ENCODE measurements at regions of chr1 and their contacts with region 1.

Region 1: DNA sequence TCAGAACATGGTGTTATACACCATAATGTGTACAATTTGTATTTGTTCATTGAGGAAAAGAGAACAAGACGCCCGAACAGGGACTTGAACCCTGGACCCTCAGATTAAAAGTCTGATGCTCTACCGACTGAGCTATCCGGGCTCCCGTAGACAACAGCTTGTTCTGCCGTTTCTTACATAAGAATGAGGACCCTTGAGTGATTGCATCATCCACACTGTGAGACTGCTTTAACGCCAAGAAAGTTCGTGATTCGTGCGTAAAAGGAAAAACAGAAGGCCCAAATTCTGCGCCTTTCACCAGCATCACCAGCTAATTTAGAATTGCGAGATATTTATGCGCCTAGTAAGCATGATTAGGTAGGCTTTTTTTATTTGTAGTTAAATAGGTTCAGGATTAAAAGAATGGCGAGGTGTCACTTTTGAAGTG is 9.2 kb upstream of the MDM4 start:
- DNase-seq: peak; percentile 66 to 94 (median 68)
- ATAC-seq: peak; percentile 79
- H3K4me3 ChIP-seq: peak overlapping the region; percentile 46
- H3K27ac ChIP-seq: peak overlapping the region; percentile 91
- H3K4me1 ChIP-seq: peaks cover 0 to 6% of the 10 kb centered on the region in 2 experiments; a peak in 2 of 5 replicates
- H3K27me3 ChIP-seq: no peaks in the 10 kb centered on the region
- CTCF ChIP-seq: no peak
- EP300 ChIP-seq: peak; percentile 85
- POLR2A ChIP-seq: no peak
- RAD21 ChIP-seq: peak in 1 of 2 experiments; percentile 55; a peak in 3 of 4 replicates

Region 2: GRCh38 chr1:203861379-203862184 is 645.4 kb before region 1 on chr1 and contains the start of gene SNRPE:
- CTCF ChIA-PET with region 1: no interaction called
- POLR2A ChIA-PET with region 1: no interaction called
- in situ Hi-C with region 1: no loop called
- intact Hi-C with region 1: loop called (anchors 10 kb)
- DNase-seq: peak; percentile 96 to 100 (median 97)
- ATAC-seq: peak; percentile 97
- H3K4me3 ChIP-seq: peak within 1 kb of the TSS; percentile 92
- H3K27ac ChIP-seq: peak within 1 kb of the TSS; percentile 95
- H3K4me1 ChIP-seq: peaks cover 4 to 10% of the 10 kb centered on the region in 2 experiments; a peak in 4 of 5 replicates
- H3K27me3 ChIP-seq: no peaks in the 10 kb centered on the region
- CTCF ChIP-seq: peak; percentile 96 to 99 (median 98)
- EP300 ChIP-seq: peak; percentile 59
- POLR2A ChIP-seq: peak; percentile 99
- RAD21 ChIP-seq: peak; percentile 98 to 99
- polyA plus RNA-seq, gene SNRPE: 1,614 to 1,893 TPM

Region 3: GRCh38 chr1:204171751-204172178 is 335.2 kb before region 1 on chr1:
- CTCF ChIA-PET with region 1: no interaction called
- POLR2A ChIA-PET with region 1: no interaction called
- in situ Hi-C with region 1: loop called (anchors 10 kb)
- intact Hi-C with region 1: no loop called
- DNase-seq: no peak
- ATAC-seq: no peak
- H3K4me3 ChIP-seq: no peak overlapping the region
- H3K27ac ChIP-seq: no peak overlapping the region
- H3K4me1 ChIP-seq: peaks cover 4 to 7% of the 10 kb centered on the region in 2 experiments; a peak in 3 of 5 replicates
- H3K27me3 ChIP-seq: peaks cover 4 to 5% of the 10 kb centered on the region in 2 experiments; a peak in 4 of 5 replicates
- CTCF ChIP-seq: no peak
- EP300 ChIP-seq: no peak
- POLR2A ChIP-seq: no peak
- RAD21 ChIP-seq: 0 out of 4 replicates have a peak, but pooled peaks of 1 of the 2 experiments have one; percentile 21

Region 4: GRCh38 chr1:204384994-204385352 is 122.0 kb before region 1 on chr1:
- CTCF ChIA-PET with region 1: interaction called, 4 read pairs
- POLR2A ChIA-PET with region 1: interaction called, 3 read pairs
- in situ Hi-C with region 1: no loop called
- intact Hi-C with region 1: loop called (anchors 5 kb)
- DNase-seq: no peak
- ATAC-seq: peak; percentile 19; the same call in 1 of the 3 replicates
- H3K4me3 ChIP-seq: no peak overlapping the region
- H3K27ac ChIP-seq: no peak overlapping the region
- H3K4me1 ChIP-seq: no peaks in the 10 kb centered on the region; a peak in 1 of 5 replicates
- H3K27me3 ChIP-seq: peaks cover 20 to 22% of the 10 kb centered on the region in 2 experiments
- CTCF ChIP-seq: no peak
- EP300 ChIP-seq: no peak
- POLR2A ChIP-seq: no peak
- RAD21 ChIP-seq: no peak

Region 5: GRCh38 chr1:204431310-204432165 is 75.4 kb before region 1 on chr1:
- CTCF ChIA-PET with region 1: interaction called, 28 read pairs
- POLR2A ChIA-PET with region 1: interaction called, 6 read pairs
- in situ Hi-C with region 1: no loop called
- intact Hi-C with region 1: loop called (anchors 1 kb)
- DNase-seq: peak; percentile 81 to 89 (median 88)
- ATAC-seq: peak; percentile 98
- H3K4me3 ChIP-seq: no peak overlapping the region
- H3K27ac ChIP-seq: no peak overlapping the region
- H3K4me1 ChIP-seq: peaks cover 0 to 4% of the 10 kb centered on the region in 2 experiments; a peak in 3 of 5 replicates
- H3K27me3 ChIP-seq: peaks cover 23 to 50% of the 10 kb centered on the region in 2 experiments
- CTCF ChIP-seq: peak; percentile 86 to 97 (median 91)
- EP300 ChIP-seq: no peak
- POLR2A ChIP-seq: no peak
- RAD21 ChIP-seq: peak; percentile 73 to 80

Region 6: GRCh38 chr1:204565617-204566582 is 58.9 kb after region 1 on chr1:
- CTCF ChIA-PET with region 1: no interaction called
- POLR2A ChIA-PET with region 1: interaction called, 10 read pairs
- in situ Hi-C with region 1: no loop called
- intact Hi-C with region 1: loop called (anchors 2 kb)
- DNase-seq: peak; percentile 84 to 92 (median 90)
- ATAC-seq: peak; percentile 92
- H3K4me3 ChIP-seq: no peak overlapping the region
- H3K27ac ChIP-seq: peak overlapping the region; percentile 4; the same call in 1 of the 3 replicates
- H3K4me1 ChIP-seq: peaks cover 12 to 16% of the 10 kb centered on the region in 2 experiments; a peak in 4 of 5 replicates
- H3K27me3 ChIP-seq: no peaks in the 10 kb centered on the region
- CTCF ChIP-seq: peak; percentile 81 to 91 (median 90)
- EP300 ChIP-seq: peak; percentile 95
- POLR2A ChIP-seq: no peak
- RAD21 ChIP-seq: peak; percentile 94 to 98

Region 7: DNA sequence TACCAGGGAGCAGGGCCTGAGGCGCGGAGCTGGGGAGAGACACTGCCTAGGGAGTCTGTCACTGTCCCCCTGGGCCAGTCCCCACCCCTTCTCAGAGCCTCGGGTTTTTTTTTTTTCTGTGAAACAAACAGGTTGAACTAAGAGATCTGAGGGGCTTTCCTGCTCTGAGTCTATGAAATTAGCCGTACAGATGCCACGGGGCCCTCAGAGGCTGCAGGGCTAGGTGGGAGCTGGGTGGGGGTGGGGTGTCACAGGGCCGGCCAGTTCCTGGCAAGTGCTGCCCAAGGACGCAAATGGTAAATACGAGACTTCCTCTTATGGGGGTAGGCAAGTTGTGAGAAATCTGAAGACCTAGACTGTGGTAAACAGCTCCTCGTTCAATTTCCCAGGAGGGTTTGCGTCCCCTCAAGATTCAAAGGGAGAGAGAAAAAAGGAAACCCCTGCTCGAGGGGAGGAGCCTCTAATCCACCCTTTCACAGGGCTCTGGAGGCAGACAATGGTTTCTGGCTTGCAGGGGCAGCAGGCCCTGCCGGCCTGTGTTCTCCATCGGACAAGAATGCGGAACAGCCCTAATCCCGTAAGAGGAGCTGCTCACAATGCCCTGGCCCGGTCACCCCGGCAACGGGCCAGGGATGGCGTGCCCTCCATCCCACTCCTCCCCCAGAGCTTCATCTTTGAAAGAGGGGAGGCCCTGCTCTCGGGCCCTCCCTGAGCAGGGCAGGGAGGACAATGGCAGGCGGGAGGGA is 806.8 kb after region 1 on chr1:
- CTCF ChIA-PET with region 1: no interaction called
- POLR2A ChIA-PET with region 1: no interaction called
- in situ Hi-C with region 1: no loop called
- intact Hi-C with region 1: no loop called
- DNase-seq: no peak
- ATAC-seq: no peak; the same call in 2 of the 3 replicates
- H3K4me3 ChIP-seq: no peak overlapping the region
- H3K27ac ChIP-seq: no peak overlapping the region
- H3K4me1 ChIP-seq: peaks cover 0 to 3% of the 10 kb centered on the region in 2 experiments; a peak in 1 of 5 replicates
- H3K27me3 ChIP-seq: peaks cover 15 to 51% of the 10 kb centered on the region in 2 experiments; a peak in 4 of 5 replicates
- CTCF ChIP-seq: no peak
- EP300 ChIP-seq: no peak
- POLR2A ChIP-seq: no peak
- RAD21 ChIP-seq: no peak